Calu3 (cell line): ENCODE measurements at regions of chrX and their contacts with region 1.

Region 1: DNA sequence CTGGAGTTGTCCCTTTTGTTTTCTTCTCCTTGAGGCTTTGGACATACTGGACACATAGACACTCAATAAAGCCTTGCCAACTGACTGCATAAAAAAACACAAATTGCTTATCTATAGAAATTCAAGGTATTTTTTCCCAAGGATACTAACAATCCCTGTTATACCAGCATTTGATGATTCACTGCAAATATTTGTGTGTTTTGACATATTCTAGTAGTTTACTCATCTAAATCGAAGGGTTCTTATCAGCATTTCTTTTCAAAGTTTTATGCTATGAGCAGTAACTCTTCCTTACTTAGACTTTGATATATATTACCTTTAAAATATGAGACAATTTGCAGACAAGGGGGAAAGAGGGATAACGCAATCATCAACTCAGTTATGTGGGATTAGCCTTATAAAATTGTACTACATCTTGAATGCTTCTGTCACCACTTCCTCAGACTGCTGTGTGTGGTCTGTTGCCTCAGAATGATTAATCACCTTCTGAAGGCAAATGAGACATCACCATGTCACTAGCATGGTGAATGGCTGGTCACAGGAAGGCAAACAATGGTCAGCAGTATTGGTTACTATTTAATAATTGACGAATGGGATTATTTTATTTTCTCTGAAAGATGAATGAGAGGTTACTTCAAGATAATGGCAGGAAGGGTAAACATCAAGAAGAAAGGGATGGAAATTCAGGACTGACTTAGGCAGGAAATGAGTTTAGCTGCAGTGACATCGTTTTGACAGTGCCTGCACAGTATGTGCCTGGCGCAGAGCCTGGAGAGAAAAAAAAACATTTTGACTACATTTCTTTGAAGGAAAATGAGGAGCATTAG is 544.3 kb upstream of the CNKSR2 start:
- DNase-seq: peak; percentile 24
- H3K4me3 Mint-ChIP-seq: peak overlapping the region; percentile 11
- H3K27ac Mint-ChIP-seq: peak overlapping the region; percentile 75
- H3K4me1 Mint-ChIP-seq: peaks cover 10% of the 10 kb centered on the region
- H3K27me3 Mint-ChIP-seq: no peaks in the 10 kb centered on the region
- CTCF ChIP-seq: no peak

Region 2: DNA sequence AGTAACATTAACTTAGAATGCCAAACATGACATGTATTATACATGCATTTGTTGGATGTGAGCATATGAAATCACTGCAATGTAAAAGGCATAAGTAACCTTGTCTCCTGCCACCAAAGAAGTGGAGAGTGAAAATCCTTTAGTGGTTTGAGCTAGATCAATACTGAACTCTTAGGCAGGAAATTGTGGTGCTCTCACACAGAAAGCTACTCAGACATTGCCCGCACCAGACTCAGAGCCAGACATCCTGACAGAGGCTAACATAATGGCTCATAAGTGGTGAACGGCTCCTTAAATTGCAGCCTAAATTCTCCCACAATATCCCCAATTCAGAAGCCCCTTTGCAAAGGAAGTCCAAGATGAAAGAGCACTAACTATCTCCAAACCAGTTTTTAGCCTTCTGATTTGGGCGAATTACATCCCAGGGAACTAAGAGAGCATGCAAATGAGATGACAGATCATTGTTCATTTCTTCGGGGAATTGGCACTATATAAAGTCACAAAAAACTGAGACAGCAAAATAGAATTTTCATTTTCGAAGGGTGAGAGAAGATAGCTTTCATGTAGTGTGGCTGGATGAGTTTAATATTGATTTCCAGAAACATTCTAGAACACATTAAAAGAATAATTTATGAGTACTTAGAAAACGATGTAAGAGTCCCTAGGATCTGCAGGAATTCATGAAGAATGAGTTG is 329.6 kb before region 1 on chrX:
- CTCF ChIA-PET with region 1: no interaction called
- intact Hi-C with region 1: no loop called
- DNase-seq: no peak
- H3K4me3 Mint-ChIP-seq: no peak overlapping the region
- H3K27ac Mint-ChIP-seq: no peak overlapping the region
- H3K4me1 Mint-ChIP-seq: no peaks in the 10 kb centered on the region
- H3K27me3 Mint-ChIP-seq: no peaks in the 10 kb centered on the region
- CTCF ChIP-seq: no peak

Region 3: DNA sequence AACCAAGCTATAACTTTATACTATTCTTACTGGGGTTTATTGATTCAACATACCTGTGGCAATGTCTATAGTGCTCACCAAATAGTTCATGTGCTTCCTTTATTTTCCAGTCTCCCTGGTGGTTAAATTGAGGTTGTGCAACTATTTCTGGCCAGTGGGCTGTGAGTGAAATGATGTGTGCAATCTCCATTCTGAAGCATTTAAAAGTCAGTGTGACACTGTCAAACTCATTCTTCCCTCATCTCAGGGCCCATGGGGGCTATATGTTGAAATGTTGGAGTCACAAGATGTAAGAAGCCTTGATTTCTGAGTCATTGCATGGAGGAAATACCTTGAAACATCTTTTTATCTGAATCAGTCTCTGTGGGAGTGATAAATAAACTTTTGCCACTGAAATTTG is 148.9 kb before region 1 on chrX:
- CTCF ChIA-PET with region 1: no interaction called
- intact Hi-C with region 1: loop called (anchors 5 kb)
- DNase-seq: peak; percentile 9
- H3K4me3 Mint-ChIP-seq: no peak overlapping the region
- H3K27ac Mint-ChIP-seq: no peak overlapping the region
- H3K4me1 Mint-ChIP-seq: peaks cover 26% of the 10 kb centered on the region
- H3K27me3 Mint-ChIP-seq: no peaks in the 10 kb centered on the region
- CTCF ChIP-seq: peak; percentile 18